Mammary epithelial cell (primary cell): ENCODE measurements at regions of chr22 and their contacts with region 1.

Region 1: DNA sequence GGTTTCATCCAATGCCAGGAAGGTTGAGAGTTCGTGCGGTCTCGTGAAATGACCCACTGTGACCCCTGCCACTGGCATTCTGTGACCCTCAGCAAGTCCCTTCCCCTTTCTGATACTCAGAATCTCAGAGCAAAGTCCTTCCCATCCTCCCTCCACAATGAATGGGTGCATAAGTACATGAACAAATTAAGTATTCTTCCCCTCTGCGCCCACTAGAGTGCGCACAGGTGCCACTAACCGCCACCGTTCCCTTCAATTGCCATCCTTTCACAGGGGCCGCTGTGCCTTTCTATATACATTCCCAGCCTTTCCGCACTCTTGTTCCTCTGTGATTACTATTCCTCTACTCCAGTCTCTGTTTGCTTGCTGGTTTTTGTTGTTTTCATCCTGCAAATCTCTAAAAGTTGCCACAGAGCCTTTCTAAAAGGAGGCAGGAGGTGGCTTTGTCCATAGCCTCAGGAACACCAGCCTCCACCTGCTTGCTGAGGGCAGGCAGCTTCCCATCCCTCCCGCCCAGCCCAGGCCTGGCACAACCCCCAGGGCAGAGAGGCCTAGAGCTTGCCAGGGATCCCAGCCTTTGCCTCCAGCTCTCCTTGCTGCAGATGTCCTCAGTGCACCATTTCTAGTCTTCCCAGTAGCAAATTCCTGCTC is 6.7 kb upstream of the AP1B1 start:
- DNase-seq: peak; percentile 57
- H3K4me3 ChIP-seq: no peak overlapping the region
- H3K27ac ChIP-seq: no peak overlapping the region
- H3K4me1 ChIP-seq: no peaks in the 10 kb centered on the region
- H3K27me3 ChIP-seq: no peaks in the 10 kb centered on the region
- CTCF ChIP-seq: peak; percentile 84 to 89

Region 2: DNA sequence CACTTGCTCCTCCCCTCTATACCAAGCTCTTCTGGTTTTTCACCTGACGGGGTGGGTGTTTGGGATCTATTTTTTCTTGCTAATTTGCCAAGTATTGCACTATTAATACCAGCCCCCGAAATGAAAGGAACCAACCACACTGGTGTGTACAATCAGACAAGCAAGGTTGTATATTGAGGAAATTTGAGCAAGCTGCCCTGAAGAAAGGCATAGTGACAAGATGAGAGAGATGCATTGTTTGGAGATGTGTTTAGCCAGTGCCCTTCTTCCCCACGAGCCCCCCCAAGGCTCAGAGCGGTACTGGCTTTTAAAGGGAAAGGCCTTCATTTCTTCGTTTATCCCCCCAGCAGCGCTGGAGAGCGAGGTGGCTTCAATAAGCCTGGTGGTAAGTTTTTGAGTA is 103.8 kb before region 1 on chr22:
- CTCF ChIA-PET with region 1: no interaction called
- dilution Hi-C with region 1: no loop called
- in situ Hi-C with region 1: no loop called
- intact Hi-C with region 1: no loop called
- DNase-seq: no peak
- H3K4me3 ChIP-seq: no peak overlapping the region
- H3K27ac ChIP-seq: no peak overlapping the region
- H3K4me1 ChIP-seq: no peaks in the 10 kb centered on the region
- H3K27me3 ChIP-seq: no peaks in the 10 kb centered on the region
- CTCF ChIP-seq: no peak

Region 3: DNA sequence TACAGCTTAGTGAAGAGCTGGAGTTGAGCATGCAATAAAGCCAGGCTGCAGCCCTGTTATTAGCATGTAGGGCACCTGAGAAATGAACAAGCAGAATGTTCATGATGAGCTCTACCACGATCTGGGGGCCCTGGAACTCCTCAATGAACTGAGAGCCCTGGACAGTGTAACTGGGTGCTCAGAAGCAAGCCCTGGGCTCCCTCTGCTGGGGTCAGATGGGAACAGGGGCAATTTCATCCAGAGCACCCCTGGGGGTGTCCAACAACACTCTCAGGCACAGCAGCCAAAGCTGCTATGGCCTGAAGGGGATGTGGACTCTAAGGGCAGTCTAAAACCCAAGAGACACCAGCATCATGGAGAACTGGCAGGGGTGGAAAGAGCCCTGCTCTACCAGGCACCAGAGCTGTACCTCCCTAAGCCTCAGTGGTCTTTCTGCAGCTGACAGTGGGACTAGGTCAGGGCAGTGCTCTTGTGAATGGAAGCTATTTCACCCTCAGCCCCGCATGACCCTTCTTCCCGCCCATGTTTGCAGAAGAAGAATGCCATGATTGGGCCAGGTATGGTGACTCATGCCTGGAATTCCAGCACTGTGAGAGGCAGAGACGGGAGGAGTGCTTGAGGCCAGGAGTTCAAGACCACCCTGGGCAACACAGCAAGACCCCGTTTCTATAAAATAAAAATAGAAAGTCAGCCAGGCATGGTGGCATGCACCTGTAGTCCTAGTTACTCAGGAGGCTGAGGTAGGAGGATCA is 129.6 kb after region 1 on chr22:
- CTCF ChIA-PET with region 1: no interaction called
- dilution Hi-C with region 1: no loop called
- in situ Hi-C with region 1: no loop called
- intact Hi-C with region 1: loop called (anchors 1 kb)
- DNase-seq: peak; percentile 13
- H3K4me3 ChIP-seq: no peak overlapping the region
- H3K27ac ChIP-seq: no peak overlapping the region
- H3K4me1 ChIP-seq: no peaks in the 10 kb centered on the region
- H3K27me3 ChIP-seq: no peaks in the 10 kb centered on the region
- CTCF ChIP-seq: peak; percentile 9 to 44

Region 4: DNA sequence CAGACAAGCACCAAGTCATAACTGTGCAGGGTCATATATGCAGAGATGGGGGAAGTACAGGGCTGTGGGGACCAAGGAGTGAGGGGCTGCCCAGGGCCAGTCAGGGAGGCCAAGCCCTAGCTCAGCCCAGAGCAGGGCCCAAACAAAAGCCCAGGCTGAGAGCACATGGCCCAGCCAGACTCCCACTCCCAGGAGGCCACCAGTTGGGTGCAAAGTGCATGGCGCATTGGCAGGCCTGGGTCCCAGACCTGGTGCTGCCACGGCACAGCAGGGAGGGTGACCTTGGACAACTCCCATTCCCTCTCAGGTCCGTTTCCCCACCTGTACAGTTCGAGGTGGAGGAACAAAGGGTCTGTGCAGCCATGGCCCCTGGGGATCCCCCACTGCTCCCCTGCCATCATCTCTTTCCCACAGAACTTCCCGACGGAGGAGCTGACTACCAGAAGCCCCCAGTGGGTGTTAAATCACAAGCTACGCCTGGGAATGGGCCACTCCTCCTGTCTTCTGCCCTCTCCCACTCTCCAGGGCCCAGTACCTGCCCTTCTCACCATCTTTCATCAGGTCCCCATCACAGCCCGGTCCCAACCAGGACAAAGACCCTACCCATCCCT is 185.2 kb after region 1 on chr22:
- CTCF ChIA-PET with region 1: no interaction called
- dilution Hi-C with region 1: no loop called
- in situ Hi-C with region 1: no loop called
- intact Hi-C with region 1: loop called (anchors 10 kb)
- DNase-seq: no peak
- H3K4me3 ChIP-seq: peak overlapping the region; percentile 63 to 70 (median 67)
- H3K27ac ChIP-seq: no peak overlapping the region
- H3K4me1 ChIP-seq: peaks cover 3% of the 10 kb centered on the region
- H3K27me3 ChIP-seq: no peaks in the 10 kb centered on the region
- CTCF ChIP-seq: no peak

Region 5: DNA sequence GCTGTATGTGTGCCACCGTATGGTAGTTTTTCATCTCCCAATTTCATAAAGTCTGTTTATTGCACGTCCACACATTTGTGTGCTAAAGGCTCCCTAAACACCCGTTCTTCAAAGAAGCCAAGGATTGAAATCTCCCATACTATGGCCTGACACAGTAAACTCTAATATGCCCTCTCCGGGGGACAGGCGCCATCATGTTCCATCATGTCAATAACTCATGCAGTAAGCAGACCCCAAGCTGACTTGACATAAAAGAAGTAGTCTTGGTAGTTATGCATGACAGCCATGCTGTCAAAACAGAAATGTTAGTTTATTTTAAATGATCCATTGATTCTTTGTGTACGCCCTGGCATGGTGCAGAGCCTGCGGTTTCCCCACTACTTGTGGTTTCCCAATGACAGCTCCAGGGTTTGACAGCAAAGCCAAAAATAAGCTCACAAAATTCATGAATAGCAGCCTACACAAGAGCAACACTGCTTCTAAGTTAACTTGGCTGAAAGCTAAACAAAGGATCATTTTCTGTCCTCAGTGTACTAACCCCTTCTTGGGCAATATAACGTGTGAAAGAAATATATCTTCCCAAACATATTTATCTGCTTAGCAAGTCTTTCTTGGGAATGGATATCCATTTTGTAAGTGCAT is 268.2 kb after region 1 on chr22:
- CTCF ChIA-PET with region 1: no interaction called
- dilution Hi-C with region 1: no loop called
- in situ Hi-C with region 1: no loop called
- intact Hi-C with region 1: loop called (anchors 10 kb)
- DNase-seq: peak; percentile 55
- H3K4me3 ChIP-seq: no peak overlapping the region
- H3K27ac ChIP-seq: no peak overlapping the region
- H3K4me1 ChIP-seq: peaks cover 35% of the 10 kb centered on the region
- H3K27me3 ChIP-seq: no peaks in the 10 kb centered on the region
- CTCF ChIP-seq: no peak